ENCODE measurements at regions of chr3 and their contacts with region 1.

Region 1: GRCh38 chr3:124928333-124929202 is 6.0 kb downstream of the MUC13 start:
- DNase-seq: peak; percentile 77
- H3K4me3 ChIP-seq: no peak overlapping the region
- H3K27ac ChIP-seq: no peak overlapping the region
- H3K4me1 ChIP-seq: peaks cover 0 to 4% (median 0%) of the 10 kb centered on the region in 4 donors
- H3K27me3 ChIP-seq: no peaks in the 10 kb centered on the region
- CTCF ChIP-seq: peak; percentile 43 to 78 (median 58)
- EP300 ChIP-seq: no peak
- POLR2A ChIP-seq: no peak

Region 2: GRCh38 chr3:124178531-124178930 is 750.0 kb before region 1 on chr3:
- intact Hi-C with region 1: no loop called
- DNase-seq: no peak
- H3K4me3 ChIP-seq: no peak overlapping the region
- H3K27ac ChIP-seq: no peak overlapping the region
- H3K4me1 ChIP-seq: peaks cover 0 to 34% (median 11%) of the 10 kb centered on the region in 4 donors
- H3K27me3 ChIP-seq: no peaks in the 10 kb centered on the region
- CTCF ChIP-seq: no peak
- EP300 ChIP-seq: no peak
- POLR2A ChIP-seq: no peak

Region 3: DNA sequence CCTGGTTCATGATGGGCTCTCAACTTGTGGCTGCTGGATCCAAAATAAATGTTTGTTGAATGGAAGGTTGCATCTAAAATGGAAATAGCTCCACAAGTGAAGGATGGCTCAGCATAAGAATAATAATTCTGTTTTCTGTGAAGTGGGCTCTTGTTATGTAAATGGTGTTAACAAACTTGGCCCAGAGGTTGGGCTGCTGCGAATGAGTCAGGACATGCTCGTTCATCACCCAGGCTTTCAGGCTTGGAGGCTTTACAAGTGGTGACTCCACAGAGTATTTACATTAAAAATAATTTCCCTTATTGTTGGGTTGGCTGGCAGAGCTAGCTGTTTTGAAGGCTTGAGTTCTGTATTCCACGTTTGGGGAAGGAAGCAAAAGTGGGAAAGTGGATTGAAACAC is 101.9 kb before region 1 on chr3:
- intact Hi-C with region 1: no loop called
- DNase-seq: peak; percentile 90
- H3K4me3 ChIP-seq: no peak overlapping the region
- H3K27ac ChIP-seq: peak overlapping the region; percentile 73 to 89 (median 80)
- H3K4me1 ChIP-seq: peaks cover 0 to 48% (median 39%) of the 10 kb centered on the region in 4 donors
- H3K27me3 ChIP-seq: no peaks in the 10 kb centered on the region
- CTCF ChIP-seq: no peak
- EP300 ChIP-seq: peak in 2 of 4 donors; percentile 28 to 79
- POLR2A ChIP-seq: no peak

Region 4: GRCh38 chr3:125062888-125063618 is 134.5 kb after region 1 on chr3:
- intact Hi-C with region 1: loop called (anchors 10 kb)
- DNase-seq: no peak
- H3K4me3 ChIP-seq: no peak overlapping the region
- H3K27ac ChIP-seq: peak overlapping the region; percentile 78 to 95 (median 80)
- H3K4me1 ChIP-seq: peaks cover 0 to 42% (median 41%) of the 10 kb centered on the region in 4 donors
- H3K27me3 ChIP-seq: no peaks in the 10 kb centered on the region
- CTCF ChIP-seq: no peak
- EP300 ChIP-seq: no peak
- POLR2A ChIP-seq: no peak

Region 5: GRCh38 chr3:125165189-125165947 is 236.8 kb after region 1 on chr3:
- intact Hi-C with region 1: loop called (anchors 10 kb)
- DNase-seq: no peak
- H3K4me3 ChIP-seq: no peak overlapping the region
- H3K27ac ChIP-seq: no peak overlapping the region
- H3K4me1 ChIP-seq: peaks cover 0 to 16% (median 0%) of the 10 kb centered on the region in 4 donors
- H3K27me3 ChIP-seq: no peaks in the 10 kb centered on the region
- CTCF ChIP-seq: peak in 3 of 4 experiments; percentile 34 to 45 (median 37)
- EP300 ChIP-seq: no peak
- POLR2A ChIP-seq: no peak

Region 6: GRCh38 chr3:125437631-125438435 is 509.3 kb after region 1 on chr3:
- intact Hi-C with region 1: loop called (anchors 2 kb)
- DNase-seq: peak; percentile 71
- H3K4me3 ChIP-seq: no peak overlapping the region
- H3K27ac ChIP-seq: no peak overlapping the region
- H3K4me1 ChIP-seq: no peaks in the 10 kb centered on the region
- H3K27me3 ChIP-seq: no peaks in the 10 kb centered on the region
- CTCF ChIP-seq: peak; percentile 60 to 95 (median 89)
- EP300 ChIP-seq: no peak
- POLR2A ChIP-seq: no peak

Measured in sigmoid colon (tissue), 7 donors.